MCF 10A (cell line): ENCODE measurements at regions of chr15 and their contacts with region 1.

Region 1: GRCh38 chr15:31365655-31366127 is 39.1 kb downstream of the KLF13 start:
- DNase-seq: peak; percentile 92
- H3K4me3 Mint-ChIP-seq: peak overlapping the region; percentile 76
- H3K27ac Mint-ChIP-seq: peak overlapping the region; percentile 86
- H3K4me1 Mint-ChIP-seq: peaks cover 57% of the 10 kb centered on the region
- H3K27me3 Mint-ChIP-seq: no peaks in the 10 kb centered on the region
- CTCF ChIP-seq: peak; percentile 49

Region 2: GRCh38 chr15:31215490-31216214 is 150.0 kb before region 1 on chr15:
- CTCF ChIA-PET with region 1: interaction called, 14 read pairs
- POLR2A ChIA-PET with region 1: interaction called, 8 read pairs
- intact Hi-C with region 1: no loop called
- DNase-seq: peak; percentile 94
- H3K4me3 Mint-ChIP-seq: peak overlapping the region; percentile 68
- H3K27ac Mint-ChIP-seq: peak overlapping the region; percentile 57
- H3K4me1 Mint-ChIP-seq: peaks cover 16% of the 10 kb centered on the region
- H3K27me3 Mint-ChIP-seq: no peaks in the 10 kb centered on the region
- CTCF ChIP-seq: peak; percentile 80

Region 3: DNA sequence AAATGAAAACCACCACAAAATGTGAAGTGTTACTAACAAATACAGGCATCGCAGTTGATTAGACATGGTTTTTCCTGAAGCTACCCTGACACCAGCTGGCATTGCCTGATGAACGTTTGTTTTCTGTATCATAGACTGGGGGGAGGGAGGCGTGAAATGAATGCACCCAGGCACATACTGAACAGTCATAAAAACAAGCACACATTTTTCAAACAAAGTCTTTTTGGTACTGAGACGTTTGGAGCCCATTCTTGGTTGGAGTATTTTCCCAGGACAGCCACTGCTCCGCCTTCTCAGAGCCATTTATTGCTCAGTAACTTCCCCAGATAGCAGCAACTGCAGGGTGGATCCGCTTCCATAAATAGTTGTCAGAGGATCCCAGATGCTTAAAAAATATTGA is 13.4 kb after region 1 on chr15:
- CTCF ChIA-PET with region 1: interaction called, 28 read pairs
- POLR2A ChIA-PET with region 1: interaction called, 9 read pairs
- intact Hi-C with region 1: no loop called
- DNase-seq: no peak
- H3K4me3 Mint-ChIP-seq: no peak overlapping the region
- H3K27ac Mint-ChIP-seq: no peak overlapping the region
- H3K4me1 Mint-ChIP-seq: no peaks in the 10 kb centered on the region
- H3K27me3 Mint-ChIP-seq: no peaks in the 10 kb centered on the region
- CTCF ChIP-seq: no peak

Region 4: GRCh38 chr15:31435261-31435911 is 69.7 kb after region 1 on chr15:
- CTCF ChIA-PET with region 1: interaction called, 75 read pairs
- POLR2A ChIA-PET with region 1: interaction called, 7 read pairs
- intact Hi-C with region 1: loop called (anchors 1 kb)
- DNase-seq: peak; percentile 89
- H3K4me3 Mint-ChIP-seq: peak overlapping the region; percentile 26
- H3K27ac Mint-ChIP-seq: peak overlapping the region; percentile 90
- H3K4me1 Mint-ChIP-seq: peaks cover 15% of the 10 kb centered on the region
- H3K27me3 Mint-ChIP-seq: no peaks in the 10 kb centered on the region
- CTCF ChIP-seq: peak; percentile 50

Region 5: DNA sequence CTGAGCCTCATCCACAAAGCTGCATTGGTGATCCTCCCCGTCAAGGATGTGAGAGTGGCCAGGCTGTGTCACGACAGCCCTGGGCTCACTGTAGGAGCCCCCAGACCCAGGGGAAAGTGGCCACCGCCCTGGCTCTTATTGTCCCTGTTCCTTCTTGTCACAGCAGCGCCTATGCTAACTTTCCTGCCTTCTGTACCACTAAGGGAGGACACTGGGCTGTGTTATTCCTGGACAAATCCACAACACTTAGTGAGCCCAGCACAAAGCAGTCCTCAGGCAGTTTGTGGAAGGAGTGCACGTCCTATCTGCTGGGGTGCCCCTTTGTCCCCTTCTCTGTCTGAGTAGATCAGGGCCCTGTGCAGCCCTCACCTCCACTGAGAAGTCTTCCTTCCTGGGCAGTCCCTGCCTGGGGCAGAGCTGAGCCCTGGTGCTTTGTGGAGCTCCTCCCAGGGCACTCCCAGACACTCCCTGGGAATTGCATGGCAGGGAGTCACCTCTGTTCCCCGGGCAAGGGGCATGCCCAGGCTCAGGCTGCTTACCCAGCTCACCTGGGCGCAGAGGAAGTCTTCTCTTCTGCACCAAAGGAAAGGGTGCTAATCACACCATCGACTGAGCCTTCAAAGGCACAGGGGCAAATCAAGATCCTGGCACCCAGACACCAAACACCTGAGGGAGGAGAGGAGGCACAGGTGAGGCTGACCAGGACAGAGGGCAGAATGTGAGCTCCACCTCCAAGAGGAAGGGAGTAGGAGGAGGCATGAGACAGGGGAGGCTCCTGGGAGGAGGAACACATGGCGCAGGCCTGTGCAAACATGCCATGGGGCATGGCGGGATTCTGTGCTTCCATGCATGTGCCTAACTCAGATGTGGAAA is 99.6 kb after region 1 on chr15:
- CTCF ChIA-PET with region 1: interaction called, 17 read pairs
- POLR2A ChIA-PET with region 1: interaction called, 27 read pairs
- intact Hi-C with region 1: no loop called
- DNase-seq: peak; percentile 80
- H3K4me3 Mint-ChIP-seq: peak overlapping the region; percentile 66
- H3K27ac Mint-ChIP-seq: peak overlapping the region; percentile 90
- H3K4me1 Mint-ChIP-seq: peaks cover 10% of the 10 kb centered on the region
- H3K27me3 Mint-ChIP-seq: no peaks in the 10 kb centered on the region
- CTCF ChIP-seq: no peak